Activated CD4-positive, alpha-beta memory T cell treated with anti-CD3 and anti-CD28 coated beads, Interleukin-2, amount 10 ng/mL, durations not matched to agents 7 days and 5 days (primary cell): ENCODE measurements at regions of chr12 and their contacts with region 1.

Region 1: GRCh38 chr12:118035246-118036041 is 18.9 kb downstream of the RFC5 start:
- DNase-seq: no peak
- H3K4me3 Mint-ChIP-seq: no peak overlapping the region
- H3K27ac Mint-ChIP-seq: peak overlapping the region; percentile 63
- H3K4me1 Mint-ChIP-seq: peaks cover 37% of the 10 kb centered on the region
- H3K27me3 Mint-ChIP-seq: no peaks in the 10 kb centered on the region

Region 2: GRCh38 chr12:117874842-117875434 is 160.5 kb before region 1 on chr12:
- CTCF ChIA-PET with region 1: interaction called, 19 read pairs
- POLR2A ChIA-PET with region 1: no interaction called
- DNase-seq: peak; percentile 67
- H3K4me3 Mint-ChIP-seq: no peak overlapping the region
- H3K27ac Mint-ChIP-seq: no peak overlapping the region
- H3K4me1 Mint-ChIP-seq: peaks cover 8% of the 10 kb centered on the region
- H3K27me3 Mint-ChIP-seq: peaks cover 12% of the 10 kb centered on the region

Region 3: DNA sequence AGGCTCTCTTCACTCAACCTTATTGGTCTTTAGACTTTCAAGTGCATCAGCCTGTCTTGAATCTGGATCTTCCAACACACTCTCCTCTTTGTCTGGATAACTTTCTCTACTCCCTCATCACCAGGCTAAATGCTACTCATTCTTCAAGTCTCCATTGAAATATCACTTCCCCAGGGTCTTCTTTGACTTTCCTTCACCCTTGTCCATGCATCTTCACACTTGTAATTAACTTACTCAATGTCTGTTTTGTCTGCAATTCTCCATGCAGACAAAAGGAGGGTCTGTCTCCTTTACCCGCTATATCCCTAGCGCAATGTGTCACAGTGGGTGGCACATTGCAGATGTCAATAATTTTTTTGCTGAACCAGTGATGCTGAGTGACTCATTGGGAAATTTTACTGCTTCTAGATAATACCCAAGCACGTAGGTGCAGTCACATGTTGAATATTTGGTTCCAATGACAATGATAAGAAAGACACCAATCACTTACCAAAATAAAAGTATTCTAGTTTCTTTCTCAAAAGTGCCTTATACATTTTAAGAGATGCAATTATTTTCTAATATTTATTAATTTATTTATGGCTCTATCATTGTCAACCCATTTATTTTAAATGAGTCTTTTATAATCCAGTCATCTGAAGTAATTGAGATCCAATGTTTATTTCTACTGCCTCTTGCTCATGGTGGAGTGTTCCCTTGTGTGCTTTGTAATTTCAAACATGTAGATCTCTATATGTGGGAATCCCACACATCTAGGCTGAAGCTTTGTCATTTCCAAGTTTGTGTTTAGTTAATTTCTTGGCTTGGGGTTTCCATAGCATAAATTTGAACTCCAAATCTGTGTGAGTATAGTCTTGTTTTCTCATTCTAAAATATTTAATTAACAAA is 40.6 kb before region 1 on chr12:
- CTCF ChIA-PET with region 1: no interaction called
- POLR2A ChIA-PET with region 1: no interaction called
- DNase-seq: no peak
- H3K4me3 Mint-ChIP-seq: no peak overlapping the region
- H3K27ac Mint-ChIP-seq: no peak overlapping the region
- H3K4me1 Mint-ChIP-seq: no peaks in the 10 kb centered on the region
- H3K27me3 Mint-ChIP-seq: peaks cover 3% of the 10 kb centered on the region

Region 4: GRCh38 chr12:118082161-118082560 is 46.7 kb after region 1 on chr12:
- CTCF ChIA-PET with region 1: no interaction called
- POLR2A ChIA-PET with region 1: no interaction called
- DNase-seq: no peak
- H3K4me3 Mint-ChIP-seq: no peak overlapping the region
- H3K27ac Mint-ChIP-seq: no peak overlapping the region
- H3K4me1 Mint-ChIP-seq: no peaks in the 10 kb centered on the region
- H3K27me3 Mint-ChIP-seq: no peaks in the 10 kb centered on the region

Region 5: GRCh38 chr12:118094039-118094438 is 58.6 kb after region 1 on chr12:
- CTCF ChIA-PET with region 1: no interaction called
- POLR2A ChIA-PET with region 1: no interaction called
- DNase-seq: no peak
- H3K4me3 Mint-ChIP-seq: no peak overlapping the region
- H3K27ac Mint-ChIP-seq: no peak overlapping the region
- H3K4me1 Mint-ChIP-seq: no peaks in the 10 kb centered on the region
- H3K27me3 Mint-ChIP-seq: no peaks in the 10 kb centered on the region